Activated naive CD4-positive, alpha-beta T cell treated with anti-CD3 and anti-CD28 coated beads for 36 hours (primary cell): ENCODE measurements at regions of chr3 and their contacts with region 1.

Region 1: GRCh38 chr3:177787279-177788041 is 590.2 kb upstream of the TBL1XR1 start:
- DNase-seq: peak; percentile 36
- H3K4me3 Mint-ChIP-seq: no peak overlapping the region
- H3K27ac Mint-ChIP-seq: peak overlapping the region; percentile 65
- H3K4me1 Mint-ChIP-seq: peaks cover 29% of the 10 kb centered on the region
- H3K27me3 Mint-ChIP-seq: no peaks in the 10 kb centered on the region

Region 2: GRCh38 chr3:177419904-177420601 is 367.4 kb before region 1 on chr3:
- CTCF ChIA-PET with region 1: no interaction called
- intact Hi-C with region 1: loop called (anchors 1 kb)
- DNase-seq: peak; percentile 53
- H3K4me3 Mint-ChIP-seq: no peak overlapping the region
- H3K27ac Mint-ChIP-seq: peak overlapping the region; percentile 86
- H3K4me1 Mint-ChIP-seq: peaks cover 27% of the 10 kb centered on the region
- H3K27me3 Mint-ChIP-seq: peaks cover 2% of the 10 kb centered on the region

Region 3: DNA sequence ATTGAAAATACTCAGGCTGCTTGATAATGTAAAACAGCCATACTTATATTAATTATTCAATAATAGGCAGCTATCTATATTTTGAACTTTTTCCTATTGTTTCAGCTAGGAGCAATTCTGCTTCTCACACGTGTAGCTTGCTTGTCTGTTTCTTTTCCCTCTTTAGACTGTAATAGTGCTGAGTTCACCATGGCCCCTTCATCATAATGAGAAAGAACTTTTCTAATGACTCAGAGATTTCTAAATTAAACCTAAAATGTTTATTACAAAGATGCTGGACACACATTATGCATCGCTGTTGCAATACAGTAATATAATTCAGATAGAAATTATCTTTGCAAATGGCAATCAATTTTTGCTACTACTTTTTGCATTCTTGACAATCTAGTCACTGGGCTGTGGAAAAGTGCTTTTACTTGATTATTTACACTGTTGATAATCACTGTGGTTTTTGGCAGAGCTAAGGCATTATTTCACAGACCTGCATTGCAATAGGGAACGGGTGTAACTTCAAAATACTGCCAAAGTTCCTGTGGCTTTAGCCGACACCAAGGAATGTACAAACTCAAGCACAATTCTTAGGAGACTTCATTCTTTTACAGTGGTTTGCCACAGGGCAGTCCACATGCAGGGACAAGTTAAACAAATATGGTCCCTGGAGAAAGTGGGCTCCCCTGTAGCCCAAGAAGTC is 309.1 kb before region 1 on chr3:
- CTCF ChIA-PET with region 1: no interaction called
- intact Hi-C with region 1: no loop called
- DNase-seq: no peak
- H3K4me3 Mint-ChIP-seq: no peak overlapping the region
- H3K27ac Mint-ChIP-seq: no peak overlapping the region
- H3K4me1 Mint-ChIP-seq: no peaks in the 10 kb centered on the region
- H3K27me3 Mint-ChIP-seq: no peaks in the 10 kb centered on the region

Region 4: DNA sequence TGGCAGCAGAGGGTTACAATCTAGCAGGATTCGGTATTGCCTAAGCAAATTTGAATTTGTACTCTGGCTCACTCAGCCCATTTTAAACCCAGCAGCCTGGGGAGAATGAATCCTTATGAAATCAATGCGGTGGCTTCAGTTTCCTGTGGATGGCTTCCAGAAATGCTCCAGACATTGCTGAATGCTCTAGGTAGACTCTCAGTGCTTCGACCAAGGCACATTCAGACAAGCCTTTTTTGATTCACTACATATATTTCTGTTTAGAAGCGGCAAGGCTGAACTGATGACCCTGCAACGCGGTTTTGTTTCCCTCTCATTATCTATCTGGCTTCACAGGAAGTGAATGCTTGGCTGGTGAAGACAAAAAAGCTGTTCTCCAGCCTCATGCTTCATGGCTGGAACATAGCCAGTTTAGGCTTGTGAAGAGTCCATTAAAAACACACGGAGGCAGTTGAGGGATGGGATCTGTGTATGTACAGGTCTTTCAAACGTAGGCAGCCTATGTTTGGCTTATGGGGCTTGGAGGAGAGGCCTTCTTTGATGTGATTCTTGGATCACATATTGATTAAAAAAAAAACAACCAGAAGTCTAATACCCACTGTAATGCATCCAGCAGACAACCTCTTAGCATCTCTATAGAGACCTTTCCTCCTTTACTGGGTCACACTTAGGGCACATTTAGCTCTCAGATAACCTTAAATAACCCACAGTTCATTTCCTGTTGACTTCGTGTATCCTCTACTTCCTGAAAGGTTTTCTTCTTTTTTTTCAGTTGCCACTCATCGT is 190.0 kb before region 1 on chr3:
- CTCF ChIA-PET with region 1: no interaction called
- intact Hi-C with region 1: loop called (anchors 2 kb)
- DNase-seq: peak; percentile 51
- H3K4me3 Mint-ChIP-seq: peak overlapping the region; percentile 54
- H3K27ac Mint-ChIP-seq: peak overlapping the region; percentile 91
- H3K4me1 Mint-ChIP-seq: peaks cover 66% of the 10 kb centered on the region
- H3K27me3 Mint-ChIP-seq: no peaks in the 10 kb centered on the region

Region 5: GRCh38 chr3:177679568-177680441 is 107.7 kb before region 1 on chr3:
- CTCF ChIA-PET with region 1: no interaction called
- intact Hi-C with region 1: loop called (anchors 1 kb)
- DNase-seq: peak; percentile 47
- H3K4me3 Mint-ChIP-seq: no peak overlapping the region
- H3K27ac Mint-ChIP-seq: no peak overlapping the region
- H3K4me1 Mint-ChIP-seq: peaks cover 20% of the 10 kb centered on the region
- H3K27me3 Mint-ChIP-seq: no peaks in the 10 kb centered on the region

Region 6: DNA sequence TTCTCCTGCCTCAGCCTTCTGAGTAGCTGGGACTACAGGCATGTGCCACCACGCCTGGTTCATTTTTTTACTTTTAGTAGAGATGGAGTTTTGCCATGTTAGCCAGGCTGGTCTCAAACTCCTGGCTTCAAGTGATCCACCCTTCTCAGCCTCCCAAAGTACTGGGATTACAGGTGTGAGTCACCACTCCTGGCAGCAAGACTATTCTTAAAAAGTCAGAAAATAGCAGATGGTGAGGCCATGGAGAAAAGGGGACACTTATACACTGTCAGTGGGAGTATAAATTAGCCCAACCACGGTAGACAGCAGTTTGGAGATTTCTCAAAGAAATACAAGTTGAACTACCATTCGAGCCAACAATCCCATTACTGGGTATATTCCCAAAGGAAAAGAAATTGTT is 13.1 kb after region 1 on chr3:
- CTCF ChIA-PET with region 1: no interaction called
- intact Hi-C with region 1: loop called (anchors 1 kb)
- DNase-seq: no peak
- H3K4me3 Mint-ChIP-seq: no peak overlapping the region
- H3K27ac Mint-ChIP-seq: no peak overlapping the region
- H3K4me1 Mint-ChIP-seq: peaks cover 23% of the 10 kb centered on the region
- H3K27me3 Mint-ChIP-seq: no peaks in the 10 kb centered on the region

Region 7: GRCh38 chr3:177836671-177837070 is 49.2 kb after region 1 on chr3:
- CTCF ChIA-PET with region 1: no interaction called
- intact Hi-C with region 1: no loop called
- DNase-seq: no peak
- H3K4me3 Mint-ChIP-seq: no peak overlapping the region
- H3K27ac Mint-ChIP-seq: no peak overlapping the region
- H3K4me1 Mint-ChIP-seq: peaks cover 12% of the 10 kb centered on the region
- H3K27me3 Mint-ChIP-seq: no peaks in the 10 kb centered on the region

Region 8: DNA sequence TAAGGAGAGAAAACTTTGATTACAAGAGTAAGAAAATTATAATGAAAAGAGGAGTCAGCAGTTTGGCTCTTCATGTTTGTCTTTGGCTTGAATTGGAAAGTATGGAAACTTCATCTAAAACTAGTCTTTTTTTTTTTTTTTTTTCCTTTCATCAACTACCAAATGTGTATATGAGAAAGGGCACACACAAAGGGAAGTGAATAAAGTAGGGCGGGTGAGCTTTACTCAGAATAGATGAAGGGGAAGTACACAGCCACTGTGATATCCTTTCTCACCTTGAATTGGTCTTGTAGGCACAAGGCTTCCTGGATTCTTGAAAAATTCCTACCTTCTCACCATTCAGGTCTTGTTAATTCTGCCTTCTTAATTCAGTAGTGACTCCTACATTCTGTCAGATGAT is 96.5 kb after region 1 on chr3:
- CTCF ChIA-PET with region 1: no interaction called
- intact Hi-C with region 1: loop called (anchors 1 kb)
- DNase-seq: no peak
- H3K4me3 Mint-ChIP-seq: no peak overlapping the region
- H3K27ac Mint-ChIP-seq: no peak overlapping the region
- H3K4me1 Mint-ChIP-seq: peaks cover 18% of the 10 kb centered on the region
- H3K27me3 Mint-ChIP-seq: no peaks in the 10 kb centered on the region